ENCODE measurements at regions of chr5 and their contacts with region 1.

Region 1: DNA sequence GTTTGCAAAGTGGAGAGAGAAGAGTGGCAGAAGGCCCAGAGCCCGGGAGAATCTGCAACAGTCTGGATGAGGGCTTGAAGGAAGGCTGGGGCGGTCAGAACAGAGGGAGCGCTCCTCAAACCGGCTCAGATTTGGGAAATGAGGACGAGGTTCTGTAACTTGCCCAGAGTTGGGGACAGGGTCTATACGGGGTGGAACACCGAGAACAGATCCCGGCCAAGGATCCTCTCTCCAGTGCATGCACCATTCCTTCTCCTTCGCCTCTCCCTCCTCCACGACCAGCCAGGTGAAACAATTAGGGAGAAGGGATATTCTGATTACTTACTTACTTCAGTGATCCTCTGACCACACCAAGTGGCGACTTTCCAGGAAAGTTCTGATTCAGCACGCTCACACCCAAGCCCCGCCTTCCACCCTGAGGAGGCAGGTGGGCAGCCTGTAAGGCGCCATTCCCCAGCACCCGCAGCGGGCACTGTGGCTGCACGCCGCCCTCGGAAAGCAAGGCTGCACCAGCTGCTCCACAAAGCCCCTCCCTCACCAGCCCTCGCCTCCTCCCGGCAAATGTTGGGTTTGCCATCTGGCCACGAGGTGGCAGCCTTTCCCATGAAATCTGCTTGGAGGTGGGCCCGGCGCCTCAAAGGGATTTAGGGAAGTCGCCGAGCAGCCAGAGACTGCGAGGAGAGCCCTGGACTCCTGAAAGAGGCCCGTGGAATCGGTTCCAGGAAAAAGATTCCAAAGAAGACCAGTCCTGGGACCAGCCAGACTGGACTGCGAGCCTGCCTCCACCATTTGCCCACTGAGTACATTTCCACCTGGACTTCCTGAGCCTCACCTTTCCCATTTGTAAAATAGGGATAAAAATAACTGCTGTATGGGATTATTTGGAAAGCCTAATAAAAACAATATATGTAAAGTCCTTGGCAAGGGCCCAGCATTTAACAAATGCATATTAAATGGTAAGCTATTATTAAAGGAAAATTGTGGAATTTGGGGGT is 22.2 kb upstream of the WWC1 start:
- DNase-seq: peak; percentile 97
- H3K4me3 Mint-ChIP-seq: peak overlapping the region; percentile 71
- H3K27ac Mint-ChIP-seq: no peak overlapping the region
- H3K4me1 Mint-ChIP-seq: peaks cover 17% of the 10 kb centered on the region
- H3K27me3 Mint-ChIP-seq: no peaks in the 10 kb centered on the region
- CTCF ChIP-seq: peak; percentile 98

Region 2: DNA sequence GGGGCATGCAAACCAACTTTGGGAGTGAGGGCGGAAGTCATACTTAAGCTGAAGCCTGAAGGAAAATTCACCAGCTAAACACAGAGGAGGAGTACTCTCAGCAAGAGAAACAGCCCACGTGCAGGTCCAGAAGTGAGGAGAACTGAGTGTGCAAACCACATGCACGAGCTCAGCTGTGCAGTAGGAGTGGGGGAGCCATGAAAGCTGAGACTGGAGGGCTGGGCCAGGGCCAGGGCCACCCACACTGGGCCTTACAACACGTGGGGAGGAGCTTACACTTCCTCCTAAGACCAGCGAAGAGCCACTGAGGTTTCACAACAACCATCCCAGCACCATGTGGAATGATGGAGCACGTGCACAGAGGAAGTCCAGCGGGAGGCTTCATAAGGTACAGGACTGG is 12.9 kb after region 1 on chr5:
- CTCF ChIA-PET with region 1: interaction called, 31 read pairs
- POLR2A ChIA-PET with region 1: interaction called, 5 read pairs
- intact Hi-C with region 1: no loop called
- DNase-seq: peak; percentile 85
- H3K4me3 Mint-ChIP-seq: no peak overlapping the region
- H3K27ac Mint-ChIP-seq: no peak overlapping the region
- H3K4me1 Mint-ChIP-seq: peaks cover 8% of the 10 kb centered on the region
- H3K27me3 Mint-ChIP-seq: no peaks in the 10 kb centered on the region
- CTCF ChIP-seq: no peak

Region 3: GRCh38 chr5:168328814-168329213 is 59.6 kb after region 1 on chr5:
- CTCF ChIA-PET with region 1: interaction called, 10 read pairs
- POLR2A ChIA-PET with region 1: no interaction called
- intact Hi-C with region 1: no loop called
- DNase-seq: no peak
- H3K4me3 Mint-ChIP-seq: no peak overlapping the region
- H3K27ac Mint-ChIP-seq: no peak overlapping the region
- H3K4me1 Mint-ChIP-seq: peaks cover 29% of the 10 kb centered on the region
- H3K27me3 Mint-ChIP-seq: no peaks in the 10 kb centered on the region
- CTCF ChIP-seq: no peak

Region 4: DNA sequence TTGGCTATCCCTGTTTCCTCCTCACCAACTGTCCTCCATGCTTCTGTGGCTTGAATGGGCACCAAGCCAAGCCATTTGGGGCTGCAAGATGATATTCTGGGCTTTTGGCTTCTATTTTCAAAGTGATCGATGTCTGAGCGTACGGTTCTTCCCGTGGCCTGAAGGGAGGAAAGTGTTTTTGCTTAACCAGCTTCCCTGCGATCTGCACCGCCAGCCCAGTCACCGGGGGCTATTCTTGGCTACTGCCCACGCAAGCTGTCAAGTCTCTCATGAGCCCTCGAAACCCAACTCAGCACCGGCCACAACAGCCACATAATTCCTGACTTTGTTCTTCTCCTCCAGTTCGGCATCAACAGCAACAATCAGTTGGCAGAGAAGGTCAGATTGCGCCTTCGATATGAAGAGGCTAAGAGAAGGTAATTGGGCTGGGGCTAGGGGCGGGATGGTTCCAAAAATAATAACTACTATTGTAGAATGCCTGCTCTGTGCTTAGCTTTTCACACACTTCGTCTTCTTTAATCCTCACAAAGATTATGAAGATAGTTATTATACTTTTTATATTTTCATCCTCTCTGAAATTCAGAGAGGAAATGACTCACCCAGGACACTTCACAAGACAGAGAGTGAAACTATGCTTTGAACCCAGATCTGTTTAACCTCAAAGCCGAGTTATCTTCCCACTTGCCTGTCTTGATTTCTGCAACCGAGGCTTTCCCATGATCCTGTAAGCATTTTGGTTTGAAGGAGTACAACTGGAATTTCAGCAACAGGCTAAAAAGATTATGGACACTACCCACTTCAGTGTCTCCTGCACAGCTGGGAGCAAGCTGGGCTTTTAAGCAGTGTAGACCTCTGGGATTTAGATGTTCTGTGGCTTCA is 140.6 kb after region 1 on chr5:
- CTCF ChIA-PET with region 1: interaction called, 23 read pairs
- POLR2A ChIA-PET with region 1: interaction called, 3 read pairs
- intact Hi-C with region 1: no loop called
- DNase-seq: peak; percentile 83
- H3K4me3 Mint-ChIP-seq: peak overlapping the region; percentile 28
- H3K27ac Mint-ChIP-seq: peak overlapping the region; percentile 78
- H3K4me1 Mint-ChIP-seq: peaks cover 49% of the 10 kb centered on the region
- H3K27me3 Mint-ChIP-seq: no peaks in the 10 kb centered on the region
- CTCF ChIP-seq: no peak

Region 5: GRCh38 chr5:168434001-168434400 is 164.8 kb after region 1 on chr5:
- CTCF ChIA-PET with region 1: interaction called, 14 read pairs
- POLR2A ChIA-PET with region 1: interaction called, 3 read pairs
- intact Hi-C with region 1: loop called (anchors 1 kb)
- DNase-seq: no peak
- H3K4me3 Mint-ChIP-seq: no peak overlapping the region
- H3K27ac Mint-ChIP-seq: no peak overlapping the region
- H3K4me1 Mint-ChIP-seq: no peaks in the 10 kb centered on the region
- H3K27me3 Mint-ChIP-seq: no peaks in the 10 kb centered on the region
- CTCF ChIP-seq: no peak

Region 6: DNA sequence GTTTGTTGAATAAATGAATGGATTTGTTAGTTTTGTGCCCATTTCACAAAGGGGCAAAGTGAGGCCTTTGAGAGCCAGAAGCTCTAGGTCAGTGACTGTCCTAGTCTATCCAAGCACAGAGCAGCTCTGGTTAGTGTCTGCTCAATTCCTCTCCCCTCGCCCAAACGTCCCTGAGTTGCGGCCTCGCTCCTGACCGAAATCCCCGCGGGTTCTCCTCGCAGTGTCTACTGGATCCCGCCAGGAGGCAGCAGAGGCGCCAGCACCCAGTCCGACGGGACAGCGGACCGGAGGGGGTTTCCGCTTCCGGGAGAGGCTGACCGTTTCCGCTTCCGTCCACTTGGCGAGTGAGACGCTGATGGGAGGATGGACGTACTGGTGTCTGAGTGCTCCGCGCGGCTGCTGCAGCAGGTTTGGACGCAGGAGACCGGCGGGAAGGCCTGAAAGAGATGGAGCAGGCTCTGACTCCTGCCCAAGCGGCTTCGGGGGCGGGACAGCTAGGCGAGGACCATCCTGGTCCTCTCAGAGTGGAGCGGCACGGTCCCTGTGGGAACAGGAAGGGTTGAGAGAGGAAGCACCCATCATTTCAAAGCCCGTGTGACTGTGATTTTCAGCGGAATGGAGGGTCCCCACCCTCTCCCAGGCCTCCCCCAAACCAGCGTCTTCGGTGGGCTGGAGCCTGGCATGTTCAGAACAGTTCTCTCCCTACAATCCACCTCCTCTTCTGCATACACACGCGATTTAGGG is 217.1 kb after region 1 on chr5 and contains the start of gene RARS1:
- CTCF ChIA-PET with region 1: interaction called, 54 read pairs
- POLR2A ChIA-PET with region 1: interaction called, 16 read pairs
- intact Hi-C with region 1: loop called (anchors 1 kb)
- DNase-seq: peak; percentile 96
- H3K4me3 Mint-ChIP-seq: peak within 1 kb of the TSS; percentile 95
- H3K27ac Mint-ChIP-seq: peak within 1 kb of the TSS; percentile 87
- H3K4me1 Mint-ChIP-seq: peaks cover 19% of the 10 kb centered on the region
- H3K27me3 Mint-ChIP-seq: no peaks in the 10 kb centered on the region
- CTCF ChIP-seq: peak; percentile 97
- total RNA-seq, gene RARS1: 120 and 127 TPM in 2 replicates

Region 7: DNA sequence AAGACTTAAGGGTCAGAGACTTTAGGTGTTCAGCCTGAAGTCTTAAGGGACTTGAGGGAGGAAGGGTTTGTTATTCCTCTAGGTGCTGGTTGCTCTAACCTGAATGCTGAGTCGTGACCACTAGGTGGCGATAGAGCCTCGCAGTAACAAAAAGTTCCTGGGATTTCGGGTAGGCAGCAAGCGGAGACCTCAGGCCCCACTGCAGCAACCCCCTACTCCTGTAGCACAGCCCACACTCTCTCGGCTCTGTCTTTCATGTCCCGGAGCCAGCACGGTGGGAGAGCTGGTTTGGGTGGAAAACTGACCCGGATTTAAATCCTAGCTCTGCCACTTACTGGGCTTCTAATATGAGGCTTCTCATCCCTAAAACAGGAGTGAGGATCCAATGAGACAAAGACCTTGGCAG is 410.3 kb after region 1 on chr5:
- CTCF ChIA-PET with region 1: no interaction called
- POLR2A ChIA-PET with region 1: no interaction called
- intact Hi-C with region 1: loop called (anchors 5 kb)
- DNase-seq: peak; percentile 84
- H3K4me3 Mint-ChIP-seq: no peak overlapping the region
- H3K27ac Mint-ChIP-seq: no peak overlapping the region
- H3K4me1 Mint-ChIP-seq: no peaks in the 10 kb centered on the region
- H3K27me3 Mint-ChIP-seq: no peaks in the 10 kb centered on the region
- CTCF ChIP-seq: peak; percentile 96